ENCODE measurements at regions of chr5 and their contacts with region 1.

Region 1: DNA sequence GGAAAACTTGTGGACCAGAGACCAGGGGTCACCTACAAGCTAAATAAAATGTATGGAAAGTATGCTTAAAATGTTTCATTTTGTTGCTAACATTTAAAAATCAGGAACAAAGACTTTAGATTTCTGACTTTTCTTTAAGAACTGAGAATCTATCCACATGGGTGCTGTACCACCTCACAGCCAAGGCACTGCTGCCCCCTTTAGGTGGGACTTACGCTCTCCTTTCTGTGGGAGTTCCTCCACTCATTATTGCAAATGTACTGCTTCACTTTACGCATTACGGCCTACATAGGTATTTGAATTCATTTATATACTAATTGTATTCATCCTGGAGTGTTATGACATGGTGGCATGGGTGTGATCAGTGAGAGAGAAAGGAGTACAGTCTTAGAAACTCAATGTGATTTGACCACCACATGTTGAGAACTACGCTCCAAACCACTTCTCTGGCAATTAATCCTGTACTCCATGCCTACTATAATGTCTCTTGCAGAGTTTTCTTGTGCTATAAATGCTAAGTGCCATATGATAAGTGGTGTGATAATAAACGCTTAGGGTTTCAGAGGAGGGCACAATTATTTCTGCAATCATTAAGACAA is 24.7 kb upstream of the CETN3 start:
- DNase-seq: peak; percentile 21 to 79
- H3K4me3 ChIP-seq: no peak overlapping the region
- H3K27ac ChIP-seq: no peak overlapping the region
- H3K4me1 ChIP-seq: no peaks in the 10 kb centered on the region
- H3K27me3 ChIP-seq: no peaks in the 10 kb centered on the region
- CTCF ChIP-seq: peak; percentile 70 to 90 (median 88)
- EP300 ChIP-seq: no peak
- POLR2A ChIP-seq: no peak
- RAD21 ChIP-seq: peak; percentile 92 to 93

Region 2: DNA sequence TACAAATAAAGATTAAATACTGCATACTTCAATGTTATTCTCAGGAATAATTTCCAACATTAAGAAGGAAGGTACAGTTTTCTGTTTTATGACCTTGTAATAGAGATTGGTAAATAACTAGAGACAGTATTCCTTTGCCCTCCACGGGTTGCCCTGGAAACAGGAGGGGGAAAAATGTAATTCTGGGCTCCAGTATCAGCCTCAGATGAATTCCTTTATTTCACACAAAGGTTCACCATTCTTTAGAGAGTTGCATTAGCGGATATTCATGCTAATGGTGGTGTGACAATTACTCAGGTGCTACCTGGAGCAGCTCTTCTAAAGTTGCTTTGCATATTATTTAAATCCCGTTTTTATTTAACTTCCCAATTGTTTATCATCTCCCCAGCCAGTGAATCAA is 67.3 kb before region 1 on chr5:
- CTCF ChIA-PET with region 1: no interaction called
- POLR2A ChIA-PET with region 1: no interaction called
- DNase-seq: no peak
- H3K4me3 ChIP-seq: peak overlapping the region in 1 of 4 experiments; percentile 33; a peak in 1 of 8 replicates
- H3K27ac ChIP-seq: peak overlapping the region; percentile 25; the same call in 1 of the 2 replicates
- H3K4me1 ChIP-seq: peaks cover 0 to 7% (median 3%) of the 10 kb centered on the region in 4 experiments; a peak in 3 of 7 replicates
- H3K27me3 ChIP-seq: no peaks in the 10 kb centered on the region
- CTCF ChIP-seq: no peak
- EP300 ChIP-seq: no peak
- POLR2A ChIP-seq: no peak
- RAD21 ChIP-seq: no peak

Region 3: DNA sequence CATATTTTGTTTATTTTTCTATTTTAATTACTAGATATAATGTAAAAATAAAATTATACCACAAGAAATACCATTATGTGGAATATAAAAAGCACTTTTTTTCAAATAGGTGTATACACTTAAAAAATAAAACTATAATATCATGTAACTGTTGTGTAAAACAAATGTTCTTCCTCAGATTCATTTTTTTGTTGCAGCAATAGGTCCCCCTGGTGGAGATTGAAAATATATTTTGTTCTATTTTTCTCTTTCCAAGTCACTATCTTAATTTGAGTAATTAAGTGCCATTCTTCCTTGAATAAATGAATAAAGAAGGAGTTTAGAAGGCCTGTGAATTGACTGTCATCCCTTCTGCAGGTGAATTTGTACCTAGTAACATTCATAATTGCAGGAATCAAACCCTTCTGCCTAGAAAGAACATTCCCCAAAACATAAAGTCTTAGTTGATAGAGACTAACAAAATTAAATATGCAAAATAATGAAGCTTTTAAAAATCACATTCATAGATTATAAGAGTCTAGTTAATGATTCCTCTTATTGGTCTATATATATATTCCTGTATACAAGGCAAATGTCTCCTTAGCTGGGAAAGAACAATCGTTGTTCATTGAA is 48.0 kb before region 1 on chr5:
- CTCF ChIA-PET with region 1: interaction called, 10 read pairs
- POLR2A ChIA-PET with region 1: interaction called, 4 read pairs
- DNase-seq: no peak
- H3K4me3 ChIP-seq: no peak overlapping the region
- H3K27ac ChIP-seq: no peak overlapping the region
- H3K4me1 ChIP-seq: no peaks in the 10 kb centered on the region
- H3K27me3 ChIP-seq: no peaks in the 10 kb centered on the region
- CTCF ChIP-seq: peak in 2 of 3 experiments; percentile 19 to 25; a peak in 2 of 4 replicates
- EP300 ChIP-seq: no peak
- POLR2A ChIP-seq: no peak
- RAD21 ChIP-seq: peak in 1 of 2 experiments; percentile 65

Region 4: GRCh38 chr5:90421136-90421535 is 13.1 kb before region 1 on chr5:
- CTCF ChIA-PET with region 1: interaction called, 16 read pairs
- POLR2A ChIA-PET with region 1: no interaction called
- DNase-seq: no peak
- H3K4me3 ChIP-seq: no peak overlapping the region
- H3K27ac ChIP-seq: no peak overlapping the region
- H3K4me1 ChIP-seq: no peaks in the 10 kb centered on the region; a peak in 1 of 7 replicates
- H3K27me3 ChIP-seq: no peaks in the 10 kb centered on the region
- CTCF ChIP-seq: peak; percentile 40 to 67 (median 41)
- EP300 ChIP-seq: no peak
- POLR2A ChIP-seq: no peak
- RAD21 ChIP-seq: peak; percentile 37 to 54

Region 5: GRCh38 chr5:90446961-90447360 is 12.7 kb after region 1 on chr5:
- CTCF ChIA-PET with region 1: interaction called, 23 read pairs
- POLR2A ChIA-PET with region 1: no interaction called
- DNase-seq: no peak
- H3K4me3 ChIP-seq: no peak overlapping the region
- H3K27ac ChIP-seq: no peak overlapping the region
- H3K4me1 ChIP-seq: no peaks in the 10 kb centered on the region
- H3K27me3 ChIP-seq: no peaks in the 10 kb centered on the region
- CTCF ChIP-seq: no peak
- EP300 ChIP-seq: no peak
- POLR2A ChIP-seq: no peak
- RAD21 ChIP-seq: no peak